ENCODE measurements at regions of chr15 and their contacts with region 1.

Region 1: DNA sequence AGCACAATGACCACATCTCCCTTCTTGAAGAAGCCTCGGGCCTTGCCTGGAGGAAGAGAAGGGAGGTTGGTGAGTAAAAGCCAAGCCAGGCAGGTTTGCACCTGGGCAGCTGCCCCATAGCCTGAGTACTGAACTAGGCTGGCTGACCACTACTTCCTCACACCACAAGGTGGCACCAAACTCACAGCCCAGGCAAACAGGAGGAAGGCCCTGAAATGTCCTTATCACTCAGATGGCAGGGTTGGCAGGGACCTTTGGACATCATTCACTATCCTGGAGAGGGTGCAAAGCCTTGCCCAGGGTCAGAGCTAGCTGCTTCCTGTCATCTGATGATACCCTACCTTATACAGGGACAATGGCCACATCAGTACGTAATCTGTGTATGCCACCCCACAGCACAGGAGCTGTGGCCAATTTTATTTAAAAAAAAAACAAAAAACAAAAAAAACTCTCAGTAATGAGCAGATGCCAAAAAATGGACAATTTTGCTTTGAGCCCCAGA is 2.2 kb upstream of the GRAMD2A start:
- DNase-seq: peak in 1 of 2 donors; percentile 79
- ATAC-seq: peak; percentile 74
- H3K4me3 ChIP-seq: no peak overlapping the region
- H3K27ac ChIP-seq: peak overlapping the region in 1 of 2 donors; percentile 27
- H3K4me1 ChIP-seq: no peaks in the 10 kb centered on the region
- H3K27me3 ChIP-seq: no peaks in the 10 kb centered on the region

Region 2: GRCh38 chr15:72272213-72273002 is 72.6 kb after region 1 on chr15 and contains the start of gene PARP6:
- intact Hi-C with region 1: loop called in 1 of 2 experiments (anchors 5 kb)
- DNase-seq: peak; percentile 100
- ATAC-seq: peak; percentile 100
- H3K4me3 ChIP-seq: peak within 1 kb of the TSS; percentile 73 to 94
- H3K27ac ChIP-seq: peak within 1 kb of the TSS; percentile 7 to 37
- H3K4me1 ChIP-seq: no peaks in the 10 kb centered on the region
- H3K27me3 ChIP-seq: no peaks in the 10 kb centered on the region
- total RNA-seq, gene PARP6: 63.1 to 72.2 TPM

Region 3: GRCh38 chr15:72285927-72286516 is 86.3 kb after region 1 on chr15:
- intact Hi-C with region 1: loop called (anchors 5 kb)
- DNase-seq: peak; percentile 54 to 80
- ATAC-seq: no peak
- H3K4me3 ChIP-seq: no peak overlapping the region
- H3K27ac ChIP-seq: no peak overlapping the region
- H3K4me1 ChIP-seq: no peaks in the 10 kb centered on the region
- H3K27me3 ChIP-seq: no peaks in the 10 kb centered on the region

Region 4: GRCh38 chr15:72375847-72376581 is 176.3 kb after region 1 on chr15 and contains the start of gene HEXA:
- intact Hi-C with region 1: loop called in 1 of 2 experiments (anchors 5 kb)
- DNase-seq: peak; percentile 98 to 99
- ATAC-seq: peak; percentile 97
- H3K4me3 ChIP-seq: peak within 1 kb of the TSS; percentile 52 to 86
- H3K27ac ChIP-seq: peak within 1 kb of the TSS; percentile 17 to 89
- H3K4me1 ChIP-seq: peaks cover 5 to 6% of the 10 kb centered on the region in 2 donors
- H3K27me3 ChIP-seq: no peaks in the 10 kb centered on the region
- total RNA-seq, gene HEXA: 101 to 144 TPM

Measured in aorta (tissue), 5 donors.